Activated CD8-positive, alpha-beta T cell treated with anti-CD3 and anti-CD28 coated beads, Interleukin-2, amount 10 ng/mL, durations not matched to agents 7 days and 5 days (primary cell): ENCODE measurements at regions of chr14 and their contacts with region 1.

Region 1: DNA sequence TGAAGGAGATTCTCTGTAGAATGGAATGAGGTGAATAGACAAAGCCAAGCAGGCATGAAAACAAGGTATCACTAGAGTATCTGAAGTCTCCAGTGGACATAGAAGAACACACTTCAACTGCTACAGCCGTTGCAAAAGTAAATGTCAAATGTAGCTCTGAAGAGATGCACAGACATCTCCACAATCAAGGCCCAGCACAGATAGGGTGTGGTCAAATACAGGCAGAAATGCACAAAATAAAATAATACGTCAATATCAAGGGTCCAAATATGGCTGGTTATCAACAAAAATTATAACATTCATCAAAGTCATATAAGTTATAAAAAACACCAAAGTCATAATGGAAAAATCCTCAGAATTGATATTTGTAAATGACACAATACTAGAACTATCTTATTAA is 1107.3 kb downstream of the TMEM121 start:
- DNase-seq: no peak
- ATAC-seq: no peak
- H3K4me3 Mint-ChIP-seq: no peak overlapping the region
- H3K27ac Mint-ChIP-seq: no peak overlapping the region
- H3K4me1 Mint-ChIP-seq: peaks cover 9% of the 10 kb centered on the region
- H3K27me3 Mint-ChIP-seq: peaks cover 21% of the 10 kb centered on the region

Region 2: DNA sequence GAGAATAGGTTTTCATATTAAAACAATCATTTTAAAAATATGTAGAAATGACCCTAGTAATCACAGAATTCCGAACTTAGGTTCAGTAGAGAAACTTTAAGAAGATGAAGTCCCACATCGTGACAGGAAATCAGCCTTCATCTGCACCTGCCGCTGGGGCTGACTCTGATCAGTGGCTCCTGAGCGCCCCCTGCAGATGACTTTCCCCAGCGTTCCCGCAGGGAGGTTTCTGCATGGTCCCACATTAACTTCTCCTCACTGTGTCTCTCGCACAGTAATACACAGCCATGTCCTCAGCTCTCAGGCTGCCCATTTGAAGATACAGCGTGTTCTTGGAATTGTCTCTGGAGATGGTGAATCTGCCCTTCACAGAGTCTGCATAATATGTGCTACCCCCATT is 23.7 kb after region 1 on chr14:
- CTCF ChIA-PET with region 1: interaction called, 12 read pairs
- POLR2A ChIA-PET with region 1: no interaction called
- DNase-seq: peak; percentile 77
- ATAC-seq: peak; percentile 61
- H3K4me3 Mint-ChIP-seq: no peak overlapping the region
- H3K27ac Mint-ChIP-seq: no peak overlapping the region
- H3K4me1 Mint-ChIP-seq: peaks cover 27% of the 10 kb centered on the region
- H3K27me3 Mint-ChIP-seq: peaks cover 25% of the 10 kb centered on the region

Region 3: GRCh38 chr14:106872611-106873446 is 239.1 kb after region 1 on chr14:
- CTCF ChIA-PET with region 1: no interaction called
- POLR2A ChIA-PET with region 1: no interaction called
- DNase-seq: peak; percentile 88
- ATAC-seq: peak; percentile 86
- H3K4me3 Mint-ChIP-seq: peak overlapping the region; percentile 21
- H3K27ac Mint-ChIP-seq: no peak overlapping the region
- H3K4me1 Mint-ChIP-seq: peaks cover 29% of the 10 kb centered on the region
- H3K27me3 Mint-ChIP-seq: peaks cover 19% of the 10 kb centered on the region